Naive thymus-derived CD4-positive, alpha-beta T cell (primary cell): ENCODE measurements at regions of chr7 and their contacts with region 1.

Region 1: DNA sequence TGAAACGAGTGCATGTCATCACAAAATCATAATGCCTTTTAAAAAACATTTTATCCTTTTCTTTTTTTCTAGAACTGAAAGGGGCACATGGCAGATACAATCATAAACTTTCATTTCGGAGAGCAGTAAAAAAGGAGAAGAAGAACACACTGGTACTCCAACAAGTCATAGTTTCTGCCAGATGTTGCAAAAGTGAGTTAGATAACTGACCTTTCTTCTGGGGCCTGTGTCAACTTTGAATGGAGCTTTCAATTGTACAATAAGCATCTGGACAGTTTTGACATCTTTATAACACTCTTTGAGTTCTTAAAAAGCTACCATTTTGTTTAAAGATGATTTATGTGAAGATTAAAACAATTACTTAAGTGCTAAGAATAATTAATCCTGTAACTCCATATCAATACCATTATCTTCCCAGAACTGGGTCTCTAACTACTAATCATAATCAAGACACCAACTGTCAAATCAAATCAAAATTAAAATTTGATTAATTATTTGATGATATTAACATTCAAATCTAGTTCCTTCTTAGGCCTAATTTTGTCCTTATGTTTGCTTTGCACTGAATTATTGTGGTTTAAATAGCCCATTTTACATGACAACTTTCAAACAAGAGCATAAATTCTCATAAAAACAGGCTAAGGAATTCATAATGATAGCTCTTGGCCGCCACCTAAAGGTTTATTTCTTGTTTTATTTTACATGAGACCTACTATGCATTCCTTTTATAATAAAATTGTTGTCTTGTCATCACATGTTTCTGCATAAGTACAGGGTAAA is 19.5 kb upstream of the ITGB8 start:
- DNase-seq: no peak
- ATAC-seq: no peak
- H3K4me3 ChIP-seq: no peak overlapping the region
- H3K4me3 Mint-ChIP-seq: no peak overlapping the region
- H3K27ac ChIP-seq: no peak overlapping the region
- H3K27ac Mint-ChIP-seq: no peak overlapping the region
- H3K4me1 ChIP-seq: no peaks in the 10 kb centered on the region
- H3K4me1 Mint-ChIP-seq: no peaks in the 10 kb centered on the region
- H3K27me3 ChIP-seq: no peaks in the 10 kb centered on the region
- H3K27me3 Mint-ChIP-seq: peaks cover 0 to 4% (median 0%) of the 10 kb centered on the region in 5 donors

Region 2: DNA sequence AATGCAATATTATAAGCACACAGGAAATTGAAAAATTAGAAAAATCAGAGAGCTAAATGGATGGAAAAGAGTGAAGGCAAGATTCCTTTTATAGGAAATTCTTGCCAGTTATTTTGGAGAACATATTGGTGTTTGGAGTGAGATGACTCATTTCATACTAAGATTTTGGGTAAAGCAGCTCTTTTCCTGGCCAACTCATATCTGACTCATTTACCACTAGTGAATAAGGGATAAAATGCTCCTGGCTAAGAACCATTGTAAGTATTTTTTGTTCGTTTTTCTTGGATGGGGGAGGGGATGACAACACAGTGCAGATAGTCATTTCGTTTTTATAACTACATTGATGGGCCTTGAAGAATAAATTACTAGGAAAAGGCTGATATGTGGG is 1333.1 kb before region 1 on chr7:
- CTCF ChIA-PET with region 1: no interaction called
- POLR2A ChIA-PET with region 1: no interaction called
- intact Hi-C with region 1: no loop called
- DNase-seq: no peak
- ATAC-seq: no peak
- H3K4me3 ChIP-seq: no peak overlapping the region
- H3K4me3 Mint-ChIP-seq: no peak overlapping the region
- H3K27ac ChIP-seq: no peak overlapping the region
- H3K27ac Mint-ChIP-seq: peak overlapping the region in 1 of 9 donors; percentile 33
- H3K4me1 ChIP-seq: no peaks in the 10 kb centered on the region
- H3K4me1 Mint-ChIP-seq: no peaks in the 10 kb centered on the region
- H3K27me3 ChIP-seq: no peaks in the 10 kb centered on the region
- H3K27me3 Mint-ChIP-seq: no peaks in the 10 kb centered on the region

Region 3: GRCh38 chr7:19713676-19714075 is 597.5 kb before region 1 on chr7:
- CTCF ChIA-PET with region 1: no interaction called
- POLR2A ChIA-PET with region 1: no interaction called
- intact Hi-C with region 1: loop called (anchors 2 to 5 kb)
- DNase-seq: peak in 7 of 9 donors; percentile 15 to 59 (median 52)
- ATAC-seq: no peak
- H3K4me3 ChIP-seq: no peak overlapping the region
- H3K4me3 Mint-ChIP-seq: no peak overlapping the region
- H3K27ac ChIP-seq: no peak overlapping the region
- H3K27ac Mint-ChIP-seq: peak overlapping the region in 1 of 9 donors; percentile 65
- H3K4me1 ChIP-seq: peaks cover 7% of the 10 kb centered on the region in 2 donors
- H3K4me1 Mint-ChIP-seq: peaks cover 7 to 25% (median 15%) of the 10 kb centered on the region in 7 donors
- H3K27me3 ChIP-seq: no peaks in the 10 kb centered on the region
- H3K27me3 Mint-ChIP-seq: peaks cover 0 to 21% (median 0%) of the 10 kb centered on the region in 5 donors

Region 4: GRCh38 chr7:19754521-19755116 is 556.5 kb before region 1 on chr7:
- CTCF ChIA-PET with region 1: no interaction called
- POLR2A ChIA-PET with region 1: no interaction called
- intact Hi-C with region 1: loop called in 1 of 2 experiments (anchors 5 kb)
- DNase-seq: peak in 4 of 9 donors; percentile 1 to 26 (median 12)
- ATAC-seq: no peak
- H3K4me3 ChIP-seq: no peak overlapping the region
- H3K4me3 Mint-ChIP-seq: no peak overlapping the region
- H3K27ac ChIP-seq: no peak overlapping the region
- H3K27ac Mint-ChIP-seq: no peak overlapping the region
- H3K4me1 ChIP-seq: no peaks in the 10 kb centered on the region
- H3K4me1 Mint-ChIP-seq: no peaks in the 10 kb centered on the region
- H3K27me3 ChIP-seq: no peaks in the 10 kb centered on the region
- H3K27me3 Mint-ChIP-seq: peaks cover 0 to 13% (median 4%) of the 10 kb centered on the region in 5 donors

Region 5: DNA sequence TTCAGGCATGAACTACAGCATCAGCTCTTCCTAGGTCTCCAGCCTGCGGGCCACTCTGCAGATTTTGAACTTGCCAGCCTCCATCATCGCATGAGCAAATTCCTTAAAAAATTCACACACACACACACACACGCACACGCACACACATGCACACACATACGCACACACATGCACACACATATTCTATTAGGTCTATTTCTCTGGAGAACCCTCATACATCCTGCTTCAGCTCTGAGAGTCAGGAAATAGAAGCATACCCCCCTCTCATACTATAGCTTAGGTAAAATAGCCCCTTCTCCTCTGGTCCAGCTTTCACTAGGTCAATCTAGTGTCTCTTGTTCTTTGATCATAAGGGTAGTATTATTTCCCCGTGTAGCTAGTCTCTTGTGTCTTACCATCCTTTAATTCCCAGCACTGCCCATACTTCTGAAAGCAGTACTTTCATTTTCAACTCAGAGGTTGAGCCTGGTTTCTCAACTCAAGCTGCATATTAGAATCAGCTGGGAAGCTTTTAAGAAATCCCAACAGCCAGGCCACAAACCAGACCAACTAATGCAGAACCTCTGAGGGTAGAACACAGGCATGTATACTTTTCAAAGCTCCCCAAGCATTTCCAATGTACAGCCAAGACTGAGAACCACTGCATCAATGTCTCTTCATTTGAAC is 11.4 kb before region 1 on chr7:
- CTCF ChIA-PET with region 1: no interaction called
- POLR2A ChIA-PET with region 1: no interaction called
- intact Hi-C with region 1: no loop called
- DNase-seq: no peak
- ATAC-seq: no peak
- H3K4me3 ChIP-seq: no peak overlapping the region
- H3K4me3 Mint-ChIP-seq: no peak overlapping the region
- H3K27ac ChIP-seq: no peak overlapping the region
- H3K27ac Mint-ChIP-seq: peak overlapping the region in 1 of 9 donors; percentile 28
- H3K4me1 ChIP-seq: no peaks in the 10 kb centered on the region
- H3K4me1 Mint-ChIP-seq: peaks cover 0 to 7% (median 0%) of the 10 kb centered on the region in 7 donors
- H3K27me3 ChIP-seq: no peaks in the 10 kb centered on the region
- H3K27me3 Mint-ChIP-seq: no peaks in the 10 kb centered on the region

Region 6: DNA sequence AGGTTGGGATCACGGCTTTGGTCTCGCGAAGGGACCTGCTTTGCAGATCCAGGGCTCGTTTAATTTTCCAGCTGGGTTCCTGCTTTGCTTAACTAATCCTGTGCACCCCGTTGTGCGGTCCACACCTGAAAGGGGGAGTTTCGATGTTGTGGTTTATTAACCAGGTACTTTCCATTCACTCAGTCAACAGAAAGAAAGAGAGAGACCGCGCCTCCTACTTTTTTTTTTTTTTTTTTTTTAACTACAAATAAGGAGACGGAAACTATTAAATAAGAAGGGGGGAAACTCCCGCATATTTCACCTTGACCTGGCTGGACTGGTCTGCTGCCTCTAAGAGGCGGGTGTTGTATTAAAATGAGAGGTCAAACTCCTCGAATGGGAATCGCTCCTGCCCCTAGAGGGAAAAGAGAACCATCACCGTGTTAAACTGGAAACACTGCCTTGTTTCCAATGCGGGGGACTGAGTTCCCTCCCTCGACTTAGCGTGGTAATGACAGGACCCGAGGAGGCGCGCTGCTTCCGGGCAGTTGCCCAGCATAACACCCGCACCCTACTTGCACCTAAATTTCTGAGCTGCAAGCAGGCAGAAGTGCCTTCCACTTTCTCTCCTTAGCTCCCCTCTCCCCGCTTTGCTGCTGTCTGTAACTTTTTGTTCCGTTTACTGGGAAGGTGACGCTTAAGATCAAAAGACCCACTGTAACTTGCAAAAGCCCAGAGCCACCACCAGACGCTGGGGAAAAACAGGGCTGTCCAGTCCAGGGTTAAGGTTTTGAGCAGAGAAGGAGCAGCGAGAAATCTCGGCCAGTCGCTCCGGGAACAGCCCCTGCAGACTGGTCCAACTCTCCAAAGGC is 18.5 kb after region 1 on chr7:
- CTCF ChIA-PET with region 1: no interaction called
- POLR2A ChIA-PET with region 1: no interaction called
- intact Hi-C with region 1: no loop called
- DNase-seq: peak in 2 of 9 donors; percentile 6 to 24
- ATAC-seq: peak; percentile 49
- H3K4me3 ChIP-seq: peak overlapping the region; percentile 33
- H3K4me3 Mint-ChIP-seq: peak overlapping the region; percentile 65 to 85 (median 78)
- H3K27ac ChIP-seq: no peak overlapping the region
- H3K27ac Mint-ChIP-seq: no peak overlapping the region
- H3K4me1 ChIP-seq: no peaks in the 10 kb centered on the region
- H3K4me1 Mint-ChIP-seq: peaks cover 12 to 28% (median 21%) of the 10 kb centered on the region in 7 donors
- H3K27me3 ChIP-seq: peaks cover 4 to 5% of the 10 kb centered on the region in 2 donors
- H3K27me3 Mint-ChIP-seq: peaks cover 30 to 78% (median 47%) of the 10 kb centered on the region in 5 donors